ENCODE measurements at regions of chr22 and their contacts with region 1.

Region 1: GRCh38 chr22:37566903-37567820 is 6.9 kb downstream of the CDC42EP1 start:
- DNase-seq: peak; percentile 88 to 94
- ATAC-seq: peak; percentile 81 to 91 (median 83)
- H3K4me3 ChIP-seq: no peak overlapping the region
- H3K4me3 Mint-ChIP-seq: peak overlapping the region; percentile 65
- H3K27ac ChIP-seq: peak overlapping the region; percentile 62
- H3K27ac Mint-ChIP-seq: peak overlapping the region; percentile 67 to 82
- H3K4me1 ChIP-seq: peaks cover 35% of the 10 kb centered on the region
- H3K4me1 Mint-ChIP-seq: peaks cover 23 to 25% of the 10 kb centered on the region in 2 donors
- H3K27me3 ChIP-seq: peaks cover 16% of the 10 kb centered on the region
- H3K27me3 Mint-ChIP-seq: peaks cover 18 to 31% of the 10 kb centered on the region in 2 donors
- CTCF ChIP-seq: peak; percentile 95

Region 2: DNA sequence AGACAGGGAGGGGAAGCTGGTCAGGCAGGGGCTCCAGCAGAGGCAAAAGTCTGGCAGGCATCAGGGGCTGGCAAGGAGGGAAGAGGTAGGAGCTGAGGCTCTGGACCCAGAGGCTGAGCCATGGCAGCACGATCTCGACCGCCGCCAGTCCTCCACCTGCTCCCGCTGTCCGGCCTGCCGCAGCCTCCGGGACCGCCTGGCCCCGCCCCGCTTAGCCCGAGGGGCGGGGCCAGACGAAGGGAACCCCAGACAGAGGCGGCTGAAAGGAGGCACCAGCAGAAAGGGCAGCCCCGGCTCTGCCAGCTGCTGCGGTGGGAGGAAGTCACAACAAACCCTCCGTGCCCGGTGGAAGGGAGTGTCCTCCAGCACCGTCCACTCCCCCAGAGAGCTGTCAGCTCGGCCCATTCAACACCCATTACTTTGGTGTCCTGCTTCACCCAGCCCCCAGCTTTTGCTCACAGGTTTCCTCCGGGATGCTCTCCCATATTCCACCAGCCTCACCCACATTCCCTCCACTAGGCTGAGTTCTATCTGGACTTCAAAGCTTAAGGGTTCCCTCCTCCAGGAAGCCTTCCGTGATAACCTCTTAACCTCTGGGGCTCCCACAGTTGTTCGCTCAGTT is 80.8 kb before region 1 on chr22 and contains the start of gene MFNG:
- intact Hi-C with region 1: loop called (anchors 5 kb)
- DNase-seq: peak; percentile 70 to 85
- ATAC-seq: peak; percentile 77 to 85 (median 81)
- H3K4me3 ChIP-seq: peak within 1 kb of the TSS; percentile 91
- H3K4me3 Mint-ChIP-seq: peak within 1 kb of the TSS; percentile 94
- H3K27ac ChIP-seq: peak within 1 kb of the TSS; percentile 85
- H3K27ac Mint-ChIP-seq: peak within 1 kb of the TSS; percentile 95 to 96
- H3K4me1 ChIP-seq: peaks cover 74% of the 10 kb centered on the region
- H3K4me1 Mint-ChIP-seq: peaks cover 59 to 78% of the 10 kb centered on the region in 2 donors
- H3K27me3 ChIP-seq: no peaks in the 10 kb centered on the region
- H3K27me3 Mint-ChIP-seq: no peaks in the 10 kb centered on the region
- CTCF ChIP-seq: no peak
- total RNA-seq, gene MFNG: 75.3 to 111 (median 110) TPM

Region 3: DNA sequence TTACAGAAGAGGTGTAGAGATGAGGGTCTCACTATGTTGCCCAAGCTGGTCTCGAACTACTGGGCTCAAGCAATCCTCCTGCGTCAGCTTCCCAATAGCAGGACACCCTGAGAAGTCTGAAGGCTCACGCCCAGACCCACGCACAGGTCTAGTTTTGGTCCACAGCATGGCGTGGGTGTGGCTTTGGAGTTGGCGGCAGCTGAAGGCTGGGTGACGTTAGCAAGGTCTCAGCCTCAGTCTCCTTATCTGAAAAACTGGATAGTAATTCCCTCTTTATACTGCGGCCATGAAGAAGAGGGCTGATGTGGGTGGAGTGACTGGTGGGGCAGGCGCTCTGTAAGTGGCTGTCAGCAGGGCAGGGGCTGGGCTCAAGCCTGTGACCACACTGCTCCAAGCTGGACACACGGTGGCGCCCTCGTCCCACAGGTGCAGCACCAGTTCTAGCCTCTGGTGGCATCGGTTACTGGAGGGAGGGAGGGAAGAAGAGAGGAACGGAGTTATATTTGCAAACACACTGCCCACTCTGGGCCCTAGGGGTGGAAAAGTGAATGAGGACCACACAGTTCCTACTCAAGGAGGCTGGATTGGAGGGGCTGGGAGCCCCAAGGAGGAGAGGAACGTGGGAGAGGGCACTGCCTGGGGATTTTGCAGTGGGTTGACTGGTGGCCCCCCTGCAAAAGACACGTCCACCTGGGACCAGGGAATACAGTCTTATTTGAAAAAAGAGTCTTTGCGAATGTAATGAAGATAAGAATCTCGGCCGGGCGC is 28.4 kb before region 1 on chr22:
- intact Hi-C with region 1: loop called (anchors 1 kb)
- DNase-seq: peak; percentile 84 to 94
- ATAC-seq: peak; percentile 98 to 100 (median 100)
- H3K4me3 ChIP-seq: no peak overlapping the region
- H3K4me3 Mint-ChIP-seq: no peak overlapping the region
- H3K27ac ChIP-seq: no peak overlapping the region
- H3K27ac Mint-ChIP-seq: no peak overlapping the region
- H3K4me1 ChIP-seq: peaks cover 35% of the 10 kb centered on the region
- H3K4me1 Mint-ChIP-seq: peaks cover 7 to 19% of the 10 kb centered on the region in 2 donors
- H3K27me3 ChIP-seq: peaks cover 9% of the 10 kb centered on the region
- H3K27me3 Mint-ChIP-seq: peaks cover 7 to 22% of the 10 kb centered on the region in 2 donors
- CTCF ChIP-seq: peak; percentile 89

Region 4: GRCh38 chr22:37581504-37581903 is 14.3 kb after region 1 on chr22:
- intact Hi-C with region 1: no loop called
- DNase-seq: no peak
- ATAC-seq: no peak
- H3K4me3 ChIP-seq: no peak overlapping the region
- H3K4me3 Mint-ChIP-seq: no peak overlapping the region
- H3K27ac ChIP-seq: no peak overlapping the region
- H3K27ac Mint-ChIP-seq: no peak overlapping the region
- H3K4me1 ChIP-seq: peaks cover 16% of the 10 kb centered on the region
- H3K4me1 Mint-ChIP-seq: peaks cover 10 to 17% of the 10 kb centered on the region in 2 donors
- H3K27me3 ChIP-seq: no peaks in the 10 kb centered on the region
- H3K27me3 Mint-ChIP-seq: peaks cover 8 to 15% of the 10 kb centered on the region in 2 donors
- CTCF ChIP-seq: no peak

Measured in natural killer cell (primary cell).